MCF 10A (cell line): ENCODE measurements at regions of chr5 and their contacts with region 1.

Region 1: DNA sequence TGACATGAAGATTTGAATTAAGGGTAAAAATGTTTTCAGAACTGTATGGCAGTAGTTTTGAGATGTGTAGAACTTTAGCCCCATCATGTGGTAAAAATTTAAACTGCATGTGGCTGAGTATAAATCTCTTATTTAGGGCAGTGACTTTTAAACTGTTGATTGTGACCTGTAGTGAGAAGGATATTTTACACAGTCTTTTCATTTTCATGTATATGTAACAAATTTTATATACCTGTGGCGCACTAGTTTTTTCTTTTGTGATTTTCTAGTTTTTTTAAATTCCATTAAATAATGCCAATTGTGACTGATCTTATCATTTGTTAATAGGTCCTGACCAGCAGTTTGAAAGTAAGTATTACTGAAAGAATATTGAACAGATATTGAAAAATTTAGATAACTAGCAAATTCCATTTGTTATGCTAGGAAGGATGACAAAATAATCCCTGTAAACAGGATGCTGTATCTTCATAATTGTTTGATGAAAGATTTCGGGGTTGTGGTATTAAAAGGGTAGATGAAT is 47.2 kb downstream of the GPBP1 start:
- DNase-seq: peak; percentile 70
- H3K4me3 Mint-ChIP-seq: no peak overlapping the region
- H3K27ac Mint-ChIP-seq: peak overlapping the region; percentile 42
- H3K4me1 Mint-ChIP-seq: peaks cover 15% of the 10 kb centered on the region
- H3K27me3 Mint-ChIP-seq: no peaks in the 10 kb centered on the region
- CTCF ChIP-seq: peak; percentile 81

Region 2: DNA sequence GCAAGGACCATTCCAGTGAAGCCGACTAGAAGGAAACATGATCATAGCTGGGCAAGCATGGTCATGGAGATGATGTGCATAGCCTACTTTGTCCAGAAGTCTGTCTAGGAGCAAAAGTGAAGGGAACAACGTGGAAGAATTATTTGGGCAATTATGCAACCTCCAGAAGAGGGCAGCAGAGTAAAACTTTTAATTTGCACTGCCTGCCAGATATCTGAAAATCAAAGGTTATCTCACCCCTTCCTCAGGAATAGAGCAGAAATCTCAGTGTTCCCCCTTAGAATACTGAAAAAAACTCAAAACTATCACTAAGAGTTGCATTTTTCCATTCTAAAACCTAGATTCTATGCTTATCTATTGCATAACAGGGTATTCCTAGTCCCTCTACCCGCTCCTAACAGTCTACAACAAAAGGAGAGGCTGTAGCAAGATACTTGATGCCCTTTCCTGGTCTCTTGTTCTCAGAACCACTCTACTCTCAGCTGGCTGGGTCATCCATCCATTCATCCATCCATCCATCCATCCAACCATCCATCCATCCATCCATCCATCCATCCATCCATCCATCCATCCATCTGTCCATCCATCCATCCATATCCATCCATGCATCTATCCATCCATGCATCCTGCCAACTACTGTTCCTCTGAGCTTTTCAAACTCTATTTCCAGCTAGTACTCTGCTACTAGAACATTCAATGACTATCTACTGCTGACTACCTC is 320.1 kb before region 1 on chr5:
- CTCF ChIA-PET with region 1: interaction called, 19 read pairs
- POLR2A ChIA-PET with region 1: no interaction called
- intact Hi-C with region 1: loop called (anchors 2 kb)
- DNase-seq: peak; percentile 63
- H3K4me3 Mint-ChIP-seq: no peak overlapping the region
- H3K27ac Mint-ChIP-seq: no peak overlapping the region
- H3K4me1 Mint-ChIP-seq: no peaks in the 10 kb centered on the region
- H3K27me3 Mint-ChIP-seq: no peaks in the 10 kb centered on the region
- CTCF ChIP-seq: peak; percentile 78

Region 3: GRCh38 chr5:56951946-56952691 is 269.0 kb before region 1 on chr5 and contains the start of gene MIER3:
- CTCF ChIA-PET with region 1: interaction called, 5 read pairs
- POLR2A ChIA-PET with region 1: interaction called, 3 read pairs
- intact Hi-C with region 1: loop called (anchors 2 kb)
- DNase-seq: peak; percentile 73
- H3K4me3 Mint-ChIP-seq: peak within 1 kb of the TSS; percentile 88
- H3K27ac Mint-ChIP-seq: peak within 1 kb of the TSS; percentile 56
- H3K4me1 Mint-ChIP-seq: peaks cover 14% of the 10 kb centered on the region
- H3K27me3 Mint-ChIP-seq: peaks cover 13% of the 10 kb centered on the region
- CTCF ChIP-seq: no peak
- total RNA-seq, gene MIER3: 17.8 and 25.0 TPM in 2 replicates

Region 4: DNA sequence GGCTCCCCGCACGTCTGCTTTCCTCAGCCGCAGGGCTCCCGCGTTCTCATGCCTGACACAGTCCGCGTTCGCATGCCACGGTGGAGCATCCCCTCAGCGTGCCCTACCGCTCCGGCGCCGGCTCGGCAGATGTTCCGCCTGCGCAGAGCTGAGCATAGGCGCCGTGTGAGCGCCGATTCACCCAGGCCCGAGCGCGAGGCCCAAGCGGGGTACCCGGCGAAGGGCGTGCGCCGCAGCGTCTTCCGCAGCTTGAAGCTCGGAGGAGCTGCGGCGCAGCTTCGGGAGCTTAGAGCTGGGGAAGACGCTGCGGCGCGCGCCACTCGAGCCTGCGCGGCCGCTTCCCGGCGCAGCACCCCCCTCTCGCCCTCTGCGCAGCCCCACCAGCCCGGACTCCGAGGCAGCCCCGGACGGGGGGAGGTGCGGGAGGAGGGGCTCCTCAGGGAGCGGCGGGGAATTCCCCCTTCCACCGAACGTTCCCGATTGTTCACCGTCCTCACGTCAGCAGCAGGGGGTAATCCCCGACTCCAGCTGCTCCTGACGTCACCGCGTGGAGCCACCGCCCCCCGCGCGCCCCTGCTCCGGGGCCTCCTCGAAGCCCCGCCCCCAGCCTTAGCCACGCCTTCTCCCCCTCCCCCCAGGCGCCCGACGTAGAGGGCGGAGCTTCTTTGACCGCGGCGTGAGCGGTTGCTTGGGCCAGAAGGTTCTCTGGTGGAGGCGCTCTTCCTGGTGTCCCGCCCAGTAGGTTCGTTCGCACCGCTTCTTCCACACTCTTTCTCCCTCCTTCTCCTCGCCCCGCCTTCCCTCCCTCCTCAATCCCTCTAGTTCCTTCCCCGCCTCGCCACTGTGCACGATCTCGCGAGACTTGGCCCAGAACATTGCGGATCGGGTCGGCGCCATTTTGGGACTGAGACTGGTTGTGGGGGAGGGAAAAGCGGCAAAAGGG is 47.7 kb before region 1 on chr5 and contains the start of gene GPBP1:
- CTCF ChIA-PET with region 1: interaction called, 11 read pairs
- POLR2A ChIA-PET with region 1: interaction called, 43 read pairs
- intact Hi-C with region 1: loop called (anchors 1 kb)
- DNase-seq: peak; percentile 99
- H3K4me3 Mint-ChIP-seq: peak within 1 kb of the TSS; percentile 97
- H3K27ac Mint-ChIP-seq: peak within 1 kb of the TSS; percentile 99
- H3K4me1 Mint-ChIP-seq: peaks cover 10% of the 10 kb centered on the region
- H3K27me3 Mint-ChIP-seq: no peaks in the 10 kb centered on the region
- CTCF ChIP-seq: no peak
- total RNA-seq, gene GPBP1: 63.6 and 66.5 TPM in 2 replicates

Region 5: GRCh38 chr5:57231607-57232006 is 10.5 kb after region 1 on chr5:
- CTCF ChIA-PET with region 1: interaction called, 4 read pairs
- POLR2A ChIA-PET with region 1: interaction called, 11 read pairs
- intact Hi-C with region 1: no loop called
- DNase-seq: no peak
- H3K4me3 Mint-ChIP-seq: no peak overlapping the region
- H3K27ac Mint-ChIP-seq: peak overlapping the region; percentile 77
- H3K4me1 Mint-ChIP-seq: peaks cover 6% of the 10 kb centered on the region
- H3K27me3 Mint-ChIP-seq: no peaks in the 10 kb centered on the region
- CTCF ChIP-seq: no peak

Region 6: GRCh38 chr5:57276353-57276752 is 55.2 kb after region 1 on chr5:
- CTCF ChIA-PET with region 1: no interaction called
- POLR2A ChIA-PET with region 1: no interaction called
- intact Hi-C with region 1: no loop called
- DNase-seq: no peak
- H3K4me3 Mint-ChIP-seq: no peak overlapping the region
- H3K27ac Mint-ChIP-seq: no peak overlapping the region
- H3K4me1 Mint-ChIP-seq: no peaks in the 10 kb centered on the region
- H3K27me3 Mint-ChIP-seq: no peaks in the 10 kb centered on the region
- CTCF ChIP-seq: no peak